AG04450 (cell line): ENCODE measurements at regions of chr1 and their contacts with region 1.

Region 1: DNA sequence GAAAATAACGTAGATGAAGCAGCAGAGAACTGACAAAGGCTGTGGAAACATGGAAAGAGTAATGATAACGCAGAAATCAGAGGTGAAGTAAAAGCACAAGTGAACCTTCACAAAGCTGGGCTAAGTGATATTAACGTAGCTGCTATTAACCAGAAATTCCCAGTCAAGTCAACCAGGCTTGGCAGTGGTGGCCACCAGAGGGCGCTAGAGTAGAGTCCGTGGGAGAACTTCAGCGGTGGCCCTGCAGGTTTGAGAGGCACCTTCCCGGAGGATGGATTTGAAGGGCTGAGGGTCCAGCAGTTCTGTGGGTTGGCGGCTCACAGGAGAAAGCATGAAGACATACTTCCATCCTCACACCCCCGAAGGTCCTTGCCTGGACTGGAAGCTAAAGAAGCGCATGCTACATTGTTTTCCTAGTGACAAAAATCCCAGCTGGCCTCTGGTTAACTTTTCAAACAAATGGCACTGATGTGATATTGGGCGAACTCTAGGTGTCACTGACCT is 81.7 kb upstream of the ZNF648 start:
- DNase-seq: peak; percentile 51
- H3K4me3 ChIP-seq: no peak overlapping the region
- H3K27ac ChIP-seq: no peak overlapping the region
- H3K27me3 ChIP-seq: peaks cover 3% of the 10 kb centered on the region
- CTCF ChIP-seq: peak; percentile 94

Region 2: DNA sequence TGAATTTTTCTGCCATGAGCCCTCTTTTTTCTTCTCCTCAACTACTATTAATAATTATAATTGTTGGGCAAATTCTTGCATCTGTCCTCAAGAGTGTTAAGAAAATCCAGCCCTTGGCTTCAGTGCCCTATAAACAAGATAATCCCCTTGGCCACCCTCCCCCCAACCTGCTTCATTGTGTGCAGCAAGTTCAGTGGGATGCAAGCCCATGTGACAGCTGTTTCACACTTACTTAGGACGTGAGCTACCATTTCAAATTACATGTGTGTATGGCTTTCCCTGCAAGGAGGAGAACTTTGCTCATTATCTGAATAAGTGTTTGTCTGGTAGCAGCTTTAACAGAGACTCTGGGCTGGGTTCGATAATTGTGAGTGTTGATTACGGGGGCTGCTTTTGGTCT is 383.7 kb before region 1 on chr1:
- CTCF ChIA-PET with region 1: no interaction called
- POLR2A ChIA-PET with region 1: no interaction called
- DNase-seq: no peak
- H3K4me3 ChIP-seq: no peak overlapping the region
- H3K27ac ChIP-seq: no peak overlapping the region
- H3K27me3 ChIP-seq: no peaks in the 10 kb centered on the region
- CTCF ChIP-seq: no peak

Region 3: DNA sequence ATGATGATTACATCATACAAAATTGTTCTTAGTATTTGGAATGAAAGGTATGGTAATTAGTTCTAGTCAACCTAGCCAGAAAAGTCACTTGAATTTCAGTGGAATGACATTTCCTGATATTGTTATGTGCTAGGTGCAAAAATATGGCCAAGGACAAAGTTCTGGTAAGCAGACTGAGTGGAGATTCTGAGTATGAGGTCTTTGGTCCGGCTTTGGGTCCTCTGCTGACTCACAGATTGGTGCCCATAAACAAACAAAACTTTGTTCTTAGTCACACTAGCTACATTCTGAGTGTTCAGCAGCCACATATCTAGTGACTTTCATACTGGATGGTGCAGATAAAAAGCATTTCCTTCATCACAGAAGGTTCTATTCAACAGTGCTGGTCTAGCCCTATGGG is 287.8 kb before region 1 on chr1:
- CTCF ChIA-PET with region 1: no interaction called
- POLR2A ChIA-PET with region 1: no interaction called
- DNase-seq: no peak
- H3K4me3 ChIP-seq: no peak overlapping the region
- H3K27ac ChIP-seq: no peak overlapping the region
- H3K27me3 ChIP-seq: no peaks in the 10 kb centered on the region
- CTCF ChIP-seq: no peak

Region 4: DNA sequence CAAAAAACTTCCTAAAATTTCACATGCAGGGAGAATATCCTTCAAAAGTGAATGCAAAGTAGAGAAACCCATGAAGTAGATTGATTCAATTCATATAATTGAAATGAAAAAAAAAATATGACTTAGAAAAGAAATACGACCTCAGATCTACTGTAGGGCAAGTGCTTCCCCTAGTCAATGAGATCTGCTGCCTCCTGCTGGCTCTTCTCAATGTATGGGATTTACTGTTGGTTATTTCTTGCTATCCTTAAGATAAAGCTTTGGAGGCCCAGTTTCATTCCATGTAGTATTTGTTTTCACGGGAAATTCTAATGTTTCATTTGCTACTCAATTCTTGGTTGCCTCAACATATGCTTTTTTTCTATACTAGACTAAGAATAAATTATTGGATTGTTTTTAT is 127.8 kb before region 1 on chr1:
- CTCF ChIA-PET with region 1: no interaction called
- POLR2A ChIA-PET with region 1: no interaction called
- DNase-seq: no peak
- H3K4me3 ChIP-seq: no peak overlapping the region
- H3K27ac ChIP-seq: no peak overlapping the region
- H3K27me3 ChIP-seq: no peaks in the 10 kb centered on the region
- CTCF ChIP-seq: no peak

Region 5: GRCh38 chr1:182118851-182119250 is 24.4 kb before region 1 on chr1:
- CTCF ChIA-PET with region 1: interaction called, 19 read pairs
- POLR2A ChIA-PET with region 1: no interaction called
- DNase-seq: no peak
- H3K4me3 ChIP-seq: no peak overlapping the region
- H3K27ac ChIP-seq: no peak overlapping the region
- H3K27me3 ChIP-seq: no peaks in the 10 kb centered on the region
- CTCF ChIP-seq: no peak

Region 6: GRCh38 chr1:182157187-182157586 is 14.0 kb after region 1 on chr1:
- CTCF ChIA-PET with region 1: interaction called, 21 read pairs
- POLR2A ChIA-PET with region 1: no interaction called
- DNase-seq: no peak
- H3K4me3 ChIP-seq: no peak overlapping the region
- H3K27ac ChIP-seq: no peak overlapping the region
- H3K27me3 ChIP-seq: no peaks in the 10 kb centered on the region
- CTCF ChIP-seq: no peak

Region 7: GRCh38 chr1:182183606-182184005 is 40.4 kb after region 1 on chr1:
- CTCF ChIA-PET with region 1: interaction called, 10 read pairs
- POLR2A ChIA-PET with region 1: no interaction called
- DNase-seq: no peak
- H3K4me3 ChIP-seq: no peak overlapping the region
- H3K27ac ChIP-seq: no peak overlapping the region
- H3K27me3 ChIP-seq: no peaks in the 10 kb centered on the region
- CTCF ChIP-seq: no peak

Region 8: DNA sequence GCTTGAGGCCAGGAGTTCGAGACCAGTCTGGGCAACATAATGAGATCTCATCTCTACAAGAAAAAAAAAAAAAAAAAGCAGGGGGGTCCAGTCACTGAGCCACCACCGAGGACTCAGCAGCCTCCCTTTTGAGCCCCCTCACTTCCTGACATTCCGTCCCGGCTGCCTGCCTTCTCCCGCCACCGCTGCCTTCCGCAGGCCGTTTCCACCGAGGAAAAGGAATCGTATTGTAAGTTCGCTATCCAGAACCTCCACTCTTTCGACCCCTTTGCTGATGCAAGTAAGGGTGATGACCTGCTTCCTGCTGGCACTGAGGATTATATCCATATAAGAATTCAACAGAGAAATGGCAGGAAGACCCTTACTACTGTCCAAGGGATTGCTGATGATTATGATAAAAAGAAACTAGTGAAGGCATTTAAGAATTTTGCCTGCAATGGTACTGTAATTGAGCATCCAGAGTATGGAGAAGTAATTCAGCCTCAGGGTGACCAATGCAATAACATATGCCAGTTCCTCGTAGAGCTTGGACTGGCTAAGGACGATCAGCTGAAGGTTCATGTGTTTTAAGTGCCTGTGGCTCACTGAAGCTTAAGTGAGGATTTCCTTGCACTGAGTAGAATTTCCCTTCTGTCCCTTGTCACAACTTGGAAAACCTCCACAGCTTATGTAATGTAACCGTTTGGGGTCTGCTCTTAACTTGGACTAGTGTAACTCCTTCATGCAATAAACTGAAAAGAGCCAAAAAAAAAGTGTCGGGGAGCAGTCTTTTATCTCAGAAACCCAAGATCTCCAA is 192.8 kb after region 1 on chr1:
- CTCF ChIA-PET with region 1: interaction called, 10 read pairs
- POLR2A ChIA-PET with region 1: no interaction called
- DNase-seq: no peak
- H3K4me3 ChIP-seq: no peak overlapping the region
- H3K27ac ChIP-seq: no peak overlapping the region
- H3K27me3 ChIP-seq: peaks cover 2% of the 10 kb centered on the region
- CTCF ChIP-seq: no peak

Region 9: DNA sequence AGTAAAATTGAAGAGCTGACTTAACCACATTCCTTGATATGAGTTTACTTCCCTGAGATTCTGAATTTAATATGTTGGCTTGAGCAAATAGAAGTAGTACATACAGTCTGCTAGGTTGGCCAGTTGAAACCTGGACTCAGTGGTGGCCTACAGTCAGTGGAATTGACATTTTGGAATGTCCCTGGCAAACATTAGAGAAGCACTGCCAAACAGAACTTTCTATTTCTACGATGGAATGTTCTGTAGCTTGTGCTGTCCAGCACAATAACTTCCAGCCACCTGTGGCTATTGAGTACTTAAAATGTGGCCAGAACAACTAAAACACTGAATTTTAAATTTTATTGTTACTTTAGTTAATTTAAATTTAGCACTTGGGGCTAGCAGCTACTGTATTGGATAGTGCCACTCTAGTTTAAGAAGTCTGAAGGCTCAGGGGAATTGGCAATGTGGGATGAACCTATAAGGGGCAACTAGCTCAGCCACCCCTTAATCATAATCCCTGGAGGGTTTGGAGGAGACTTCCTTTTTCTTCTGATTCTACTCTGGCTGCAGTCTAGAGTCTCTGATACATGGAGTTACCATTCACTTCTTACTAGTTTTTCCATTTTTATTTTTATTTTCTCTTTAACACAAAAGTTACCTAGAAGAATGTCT is 267.5 kb after region 1 on chr1:
- CTCF ChIA-PET with region 1: interaction called, 12 read pairs
- POLR2A ChIA-PET with region 1: no interaction called
- DNase-seq: no peak
- H3K4me3 ChIP-seq: no peak overlapping the region
- H3K27ac ChIP-seq: no peak overlapping the region
- H3K27me3 ChIP-seq: peaks cover 10% of the 10 kb centered on the region
- CTCF ChIP-seq: no peak